Activated CD4-positive, alpha-beta T cell treated with anti-CD3 and anti-CD28 coated beads, Interleukin-2, amount 10 ng/mL, durations not matched to agents 24 days and 14 days (primary cell): ENCODE measurements at regions of chr3 and their contacts with region 1.

Region 1: GRCh38 chr3:58074997-58075396 is 66.8 kb downstream of the FLNB start:
- DNase-seq: no peak
- H3K4me3 Mint-ChIP-seq: no peak overlapping the region
- H3K27ac Mint-ChIP-seq: no peak overlapping the region
- H3K4me1 Mint-ChIP-seq: peaks cover 18% of the 10 kb centered on the region
- H3K27me3 Mint-ChIP-seq: no peaks in the 10 kb centered on the region

Region 2: DNA sequence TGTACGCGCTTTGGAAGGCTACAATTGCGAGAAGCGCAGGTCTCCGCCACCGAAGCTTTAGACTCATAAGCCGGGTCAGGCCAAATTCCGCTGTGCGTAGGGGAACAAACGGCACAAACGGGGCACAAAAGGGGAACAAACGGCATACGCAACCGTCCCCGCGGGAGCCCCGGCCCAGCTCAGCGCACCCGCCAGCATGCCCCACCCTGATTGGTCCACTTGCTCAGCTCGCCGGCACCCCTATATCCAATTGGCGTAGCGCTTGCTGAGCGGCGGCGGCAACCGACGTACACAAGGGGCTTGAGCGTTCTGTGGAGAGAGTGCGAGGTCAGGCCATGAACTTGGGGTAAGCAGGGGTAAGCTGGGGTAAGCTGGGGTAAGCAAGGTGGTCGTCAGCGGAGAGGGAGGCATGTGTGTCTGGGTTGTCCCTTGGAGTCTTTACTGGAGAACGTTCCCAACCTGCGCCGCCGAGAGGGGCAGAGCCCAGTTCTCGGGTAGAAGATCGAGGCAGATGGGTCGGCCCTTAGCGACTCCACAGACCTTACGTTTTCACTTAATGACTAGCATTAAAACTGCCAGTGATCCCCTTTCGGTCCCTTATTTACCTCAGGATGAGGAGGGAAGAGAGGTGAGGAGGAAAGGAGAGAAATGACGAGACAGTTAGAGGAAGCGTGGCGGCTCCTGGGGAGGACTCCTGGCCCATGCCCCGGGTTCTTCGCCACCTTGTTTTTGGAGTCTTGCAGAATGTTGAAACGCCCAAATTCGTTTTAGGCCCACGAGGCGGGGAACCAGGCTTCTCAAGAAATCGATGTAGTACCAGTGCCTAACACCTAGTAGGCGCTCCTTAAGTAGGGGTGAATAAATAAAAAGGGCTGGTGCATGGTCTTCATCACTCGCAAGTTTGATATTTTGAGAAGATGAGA is 1517.8 kb before region 1 on chr3 and contains the start of gene CCDC66:
- intact Hi-C with region 1: no loop called
- DNase-seq: peak; percentile 97
- H3K4me3 Mint-ChIP-seq: peak within 1 kb of the TSS; percentile 92
- H3K27ac Mint-ChIP-seq: peak within 1 kb of the TSS; percentile 94
- H3K4me1 Mint-ChIP-seq: peaks cover 19% of the 10 kb centered on the region
- H3K27me3 Mint-ChIP-seq: peaks cover 19% of the 10 kb centered on the region
- total RNA-seq, gene CCDC66: 36.8 and 37.8 TPM in 2 replicates

Region 3: DNA sequence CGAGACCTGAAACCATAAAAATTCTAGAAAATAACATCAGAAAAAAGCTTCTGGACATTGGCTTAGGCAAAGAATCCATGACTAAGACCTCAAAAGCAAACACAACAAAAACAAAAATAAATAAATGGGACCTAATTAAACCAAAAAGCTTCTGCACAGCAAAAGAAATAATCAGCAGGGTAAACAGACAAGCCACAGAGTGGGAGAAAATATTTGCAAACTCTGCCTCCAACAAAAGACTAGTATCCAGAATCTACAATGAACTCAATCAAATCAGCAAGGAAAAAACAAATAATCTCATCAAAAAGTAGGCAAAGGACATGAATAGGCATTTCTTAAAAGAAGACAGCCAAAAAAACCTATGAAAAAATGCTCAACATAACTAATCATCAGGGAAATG is 590.4 kb before region 1 on chr3:
- intact Hi-C with region 1: no loop called
- DNase-seq: no peak
- H3K4me3 Mint-ChIP-seq: no peak overlapping the region
- H3K27ac Mint-ChIP-seq: no peak overlapping the region
- H3K4me1 Mint-ChIP-seq: no peaks in the 10 kb centered on the region
- H3K27me3 Mint-ChIP-seq: peaks cover 6% of the 10 kb centered on the region

Region 4: DNA sequence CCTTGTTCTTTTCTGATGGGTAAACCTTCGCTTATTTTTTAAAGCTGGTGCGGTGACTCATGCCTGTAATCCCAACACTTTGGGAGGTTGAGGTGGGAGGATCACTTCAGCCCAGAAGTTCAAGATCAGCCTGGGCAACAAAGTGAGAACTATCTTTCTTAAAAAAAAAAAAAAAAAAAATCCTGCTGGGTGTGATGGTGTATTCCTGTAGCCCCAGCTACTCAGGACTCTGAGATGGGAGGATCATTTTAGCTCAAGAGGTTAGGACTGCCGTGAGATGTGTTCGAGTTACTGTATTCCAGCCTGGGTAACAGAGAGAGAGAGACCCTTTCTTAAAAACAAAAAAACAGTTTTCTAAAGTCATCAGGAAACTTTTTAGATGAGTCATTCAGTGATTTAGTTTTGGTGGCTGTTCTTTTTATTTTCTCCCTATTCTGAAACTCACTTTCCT is 281.2 kb before region 1 on chr3:
- intact Hi-C with region 1: no loop called
- DNase-seq: no peak
- H3K4me3 Mint-ChIP-seq: peak overlapping the region; percentile 9
- H3K27ac Mint-ChIP-seq: no peak overlapping the region
- H3K4me1 Mint-ChIP-seq: peaks cover 21% of the 10 kb centered on the region
- H3K27me3 Mint-ChIP-seq: no peaks in the 10 kb centered on the region

Region 5: DNA sequence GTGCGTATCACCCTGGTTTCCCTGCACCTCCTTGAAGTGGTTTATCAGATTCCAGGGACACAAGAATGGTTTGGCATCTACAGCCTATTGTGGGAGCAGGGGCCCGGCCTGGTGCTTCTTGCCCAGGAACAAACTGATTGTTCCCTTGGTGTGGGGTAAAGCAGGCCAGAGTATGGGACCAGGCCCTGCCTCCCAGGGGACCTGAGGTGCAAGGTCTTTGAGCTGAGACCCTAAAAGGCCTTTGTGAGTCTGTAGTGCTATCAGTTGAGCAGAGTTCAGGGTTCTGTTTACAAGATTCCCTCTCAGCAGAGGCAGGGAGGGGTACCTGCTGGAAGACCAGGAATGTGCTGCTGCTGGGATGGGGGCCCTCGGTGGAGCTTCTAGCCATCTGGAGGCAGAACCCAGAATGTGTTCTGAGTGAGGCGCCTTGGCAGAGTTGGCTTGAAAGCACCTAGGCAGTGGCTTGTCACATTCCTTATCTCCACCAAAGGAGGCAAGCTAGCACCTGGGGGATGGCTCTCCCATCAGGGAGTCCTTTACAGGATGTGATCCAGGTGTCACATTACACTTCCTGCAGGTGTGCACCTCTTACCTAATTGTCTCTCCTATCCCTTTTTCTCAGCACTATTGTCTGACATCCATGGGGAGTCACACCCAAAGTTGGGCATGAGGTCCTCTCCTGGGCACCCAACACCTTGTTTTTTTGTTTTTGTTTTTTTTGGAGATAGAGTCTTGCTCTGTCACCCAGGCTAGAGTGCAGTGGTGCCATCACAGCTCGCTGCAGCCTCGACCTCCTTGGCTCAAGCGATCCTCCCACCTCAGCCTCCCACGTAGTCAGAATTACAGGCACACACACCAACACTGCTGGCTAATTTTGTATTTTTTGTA is 53.7 kb before region 1 on chr3:
- intact Hi-C with region 1: loop called (anchors 5 kb)
- DNase-seq: no peak
- H3K4me3 Mint-ChIP-seq: no peak overlapping the region
- H3K27ac Mint-ChIP-seq: no peak overlapping the region
- H3K4me1 Mint-ChIP-seq: peaks cover 30% of the 10 kb centered on the region
- H3K27me3 Mint-ChIP-seq: no peaks in the 10 kb centered on the region

Region 6: GRCh38 chr3:58034738-58035523 is 40.1 kb before region 1 on chr3:
- intact Hi-C with region 1: loop called (anchors 5 kb)
- DNase-seq: peak; percentile 90
- H3K4me3 Mint-ChIP-seq: peak overlapping the region; percentile 70
- H3K27ac Mint-ChIP-seq: peak overlapping the region; percentile 82
- H3K4me1 Mint-ChIP-seq: peaks cover 50% of the 10 kb centered on the region
- H3K27me3 Mint-ChIP-seq: no peaks in the 10 kb centered on the region

Region 7: GRCh38 chr3:58116161-58116955 is 41.4 kb after region 1 on chr3:
- intact Hi-C with region 1: no loop called
- DNase-seq: peak; percentile 85
- H3K4me3 Mint-ChIP-seq: peak overlapping the region; percentile 57
- H3K27ac Mint-ChIP-seq: peak overlapping the region; percentile 78
- H3K4me1 Mint-ChIP-seq: peaks cover 20% of the 10 kb centered on the region
- H3K27me3 Mint-ChIP-seq: no peaks in the 10 kb centered on the region